IMR-90 (cell line): ENCODE measurements at regions of chr17 and their contacts with region 1.

Region 1: DNA sequence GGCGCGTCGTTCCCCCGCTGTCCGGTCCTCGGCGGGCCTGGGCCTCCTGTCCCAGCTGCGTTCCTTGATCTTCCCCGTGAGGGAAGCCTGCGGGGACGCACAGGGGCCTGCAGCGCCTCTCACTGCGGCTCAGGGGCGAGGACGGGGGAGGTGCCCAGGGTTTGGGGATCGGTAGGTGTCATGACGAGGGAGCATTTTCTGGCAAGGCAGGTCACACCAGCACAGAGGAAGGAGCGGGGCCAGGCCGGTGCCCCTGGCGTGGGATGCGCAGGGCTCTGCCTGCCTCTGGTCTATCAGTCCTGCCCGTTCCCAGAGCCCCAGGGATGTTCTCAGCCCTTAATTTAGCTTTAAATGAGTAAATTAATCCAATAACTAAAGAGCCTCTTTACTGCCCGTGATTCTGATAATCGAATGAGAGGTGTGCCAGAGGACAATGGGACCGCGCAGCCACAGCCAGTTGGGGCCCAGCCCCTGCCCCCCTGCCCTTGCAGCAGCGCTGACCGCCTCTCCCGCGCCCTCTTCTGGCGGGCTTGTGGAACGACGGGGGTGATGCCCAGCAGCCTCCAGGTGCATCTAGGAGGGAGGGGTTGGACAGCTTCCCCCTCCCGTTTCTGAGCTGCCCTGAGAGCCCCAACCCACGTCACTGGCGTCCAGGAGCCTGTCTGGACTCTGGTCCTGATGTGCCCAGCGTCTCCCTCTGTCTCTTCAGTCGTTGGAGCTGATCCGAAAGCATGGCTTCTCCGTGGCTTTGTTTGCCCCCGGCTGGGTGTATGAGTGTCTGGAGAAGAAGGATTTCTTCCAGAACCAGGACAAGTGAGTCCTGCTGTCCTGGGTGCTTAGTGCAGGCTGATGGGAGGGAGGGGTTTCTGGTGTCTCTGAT is 7.9 kb downstream of the ENGASE start:
- DNase-seq: peak; percentile 19
- ATAC-seq: peak; percentile 84
- H3K4me3 ChIP-seq: no peak overlapping the region
- H3K27ac ChIP-seq: no peak overlapping the region
- H3K4me1 ChIP-seq: no peaks in the 10 kb centered on the region
- H3K27me3 ChIP-seq: no peaks in the 10 kb centered on the region
- CTCF ChIP-seq: peak; percentile 68
- POLR2A ChIP-seq: no peak
- RAD21 ChIP-seq: peak; percentile 67

Region 2: GRCh38 chr17:79019632-79020584 is 62.6 kb before region 1 on chr17:
- CTCF ChIA-PET with region 1: interaction called, 5 read pairs
- POLR2A ChIA-PET with region 1: no interaction called
- dilution Hi-C with region 1: no loop called
- in situ Hi-C with region 1: loop called (anchors 5 kb)
- intact Hi-C with region 1: loop called (anchors 1 kb)
- DNase-seq: peak; percentile 78
- ATAC-seq: peak; percentile 68
- H3K4me3 ChIP-seq: no peak overlapping the region
- H3K27ac ChIP-seq: no peak overlapping the region
- H3K4me1 ChIP-seq: peaks cover 15% of the 10 kb centered on the region
- H3K27me3 ChIP-seq: peaks cover 2% of the 10 kb centered on the region; the same call in 1 of the 2 replicates
- CTCF ChIP-seq: peak; percentile 89
- POLR2A ChIP-seq: no peak
- RAD21 ChIP-seq: peak; percentile 84

Region 3: GRCh38 chr17:79045842-79046196 is 36.7 kb before region 1 on chr17:
- CTCF ChIA-PET with region 1: interaction called, 4 read pairs
- POLR2A ChIA-PET with region 1: no interaction called
- dilution Hi-C with region 1: no loop called
- in situ Hi-C with region 1: no loop called
- intact Hi-C with region 1: loop called (anchors 1 kb)
- DNase-seq: peak; percentile 57
- ATAC-seq: peak; percentile 98
- H3K4me3 ChIP-seq: no peak overlapping the region
- H3K27ac ChIP-seq: no peak overlapping the region
- H3K4me1 ChIP-seq: no peaks in the 10 kb centered on the region
- H3K27me3 ChIP-seq: no peaks in the 10 kb centered on the region; the same call in 1 of the 2 replicates
- CTCF ChIP-seq: peak; percentile 95
- POLR2A ChIP-seq: no peak
- RAD21 ChIP-seq: peak; percentile 86

Region 4: DNA sequence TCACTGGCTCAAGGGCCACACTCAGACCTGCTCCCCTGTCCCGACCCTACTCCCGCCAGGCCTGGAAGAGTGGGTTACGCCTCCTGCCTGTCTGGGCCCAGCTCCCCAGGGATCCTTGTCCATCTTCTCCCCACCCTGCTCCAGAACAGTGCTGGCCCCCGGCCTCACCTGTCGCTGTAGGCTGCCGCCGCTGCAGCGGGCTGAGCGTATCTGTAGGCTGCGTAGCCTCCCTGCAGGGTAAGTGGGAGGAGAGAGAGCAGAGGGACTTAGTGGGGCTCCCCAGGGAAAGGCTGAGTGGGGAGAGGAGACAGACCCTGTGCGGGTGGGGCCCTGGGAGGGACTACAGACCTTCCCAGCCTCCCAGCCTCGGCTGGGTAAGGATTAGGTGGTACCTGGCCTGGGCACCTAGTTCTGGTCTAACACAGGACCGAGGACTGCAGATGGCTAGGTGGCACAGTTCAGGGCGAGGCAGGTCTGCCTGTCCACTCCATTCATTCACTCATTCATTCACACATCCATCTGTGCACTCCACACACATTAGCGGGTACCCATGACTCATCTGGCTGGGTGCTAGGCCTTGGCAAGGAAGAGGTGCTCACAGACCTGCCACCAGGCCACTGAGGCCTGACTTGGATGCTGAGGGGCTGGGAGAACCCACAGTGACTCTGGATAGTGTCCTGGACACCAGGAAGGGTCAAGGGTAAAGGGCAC is 12.9 kb after region 1 on chr17:
- CTCF ChIA-PET with region 1: no interaction called
- POLR2A ChIA-PET with region 1: no interaction called
- dilution Hi-C with region 1: no loop called
- in situ Hi-C with region 1: no loop called
- intact Hi-C with region 1: no loop called
- DNase-seq: no peak
- ATAC-seq: no peak
- H3K4me3 ChIP-seq: no peak overlapping the region
- H3K27ac ChIP-seq: no peak overlapping the region
- H3K4me1 ChIP-seq: no peaks in the 10 kb centered on the region
- H3K27me3 ChIP-seq: peaks cover 59% of the 10 kb centered on the region
- CTCF ChIP-seq: no peak
- POLR2A ChIP-seq: no peak
- RAD21 ChIP-seq: no peak

Region 5: GRCh38 chr17:79114458-79115301 is 32.1 kb after region 1 on chr17:
- CTCF ChIA-PET with region 1: no interaction called
- POLR2A ChIA-PET with region 1: no interaction called
- dilution Hi-C with region 1: no loop called
- in situ Hi-C with region 1: no loop called
- intact Hi-C with region 1: no loop called
- DNase-seq: no peak
- ATAC-seq: peak; percentile 28; the same call in 1 of the 2 replicates
- H3K4me3 ChIP-seq: no peak overlapping the region
- H3K27ac ChIP-seq: no peak overlapping the region
- H3K4me1 ChIP-seq: no peaks in the 10 kb centered on the region
- H3K27me3 ChIP-seq: peaks cover 55% of the 10 kb centered on the region
- CTCF ChIP-seq: no peak
- POLR2A ChIP-seq: no peak
- RAD21 ChIP-seq: no peak

Region 6: GRCh38 chr17:79294459-79295071 is 212.0 kb after region 1 on chr17:
- CTCF ChIA-PET with region 1: no interaction called
- POLR2A ChIA-PET with region 1: no interaction called
- dilution Hi-C with region 1: no loop called
- in situ Hi-C with region 1: no loop called
- intact Hi-C with region 1: no loop called
- DNase-seq: peak; percentile 29
- ATAC-seq: 0 out of 2 replicates have a peak, but pooled peaks have one; percentile 40
- H3K4me3 ChIP-seq: no peak overlapping the region
- H3K27ac ChIP-seq: no peak overlapping the region
- H3K4me1 ChIP-seq: no peaks in the 10 kb centered on the region
- H3K27me3 ChIP-seq: no peaks in the 10 kb centered on the region; the same call in none of the 2 replicates
- CTCF ChIP-seq: no peak
- POLR2A ChIP-seq: no peak
- RAD21 ChIP-seq: no peak